ENCODE measurements at regions of chr1 and their contacts with region 1.

Region 1: DNA sequence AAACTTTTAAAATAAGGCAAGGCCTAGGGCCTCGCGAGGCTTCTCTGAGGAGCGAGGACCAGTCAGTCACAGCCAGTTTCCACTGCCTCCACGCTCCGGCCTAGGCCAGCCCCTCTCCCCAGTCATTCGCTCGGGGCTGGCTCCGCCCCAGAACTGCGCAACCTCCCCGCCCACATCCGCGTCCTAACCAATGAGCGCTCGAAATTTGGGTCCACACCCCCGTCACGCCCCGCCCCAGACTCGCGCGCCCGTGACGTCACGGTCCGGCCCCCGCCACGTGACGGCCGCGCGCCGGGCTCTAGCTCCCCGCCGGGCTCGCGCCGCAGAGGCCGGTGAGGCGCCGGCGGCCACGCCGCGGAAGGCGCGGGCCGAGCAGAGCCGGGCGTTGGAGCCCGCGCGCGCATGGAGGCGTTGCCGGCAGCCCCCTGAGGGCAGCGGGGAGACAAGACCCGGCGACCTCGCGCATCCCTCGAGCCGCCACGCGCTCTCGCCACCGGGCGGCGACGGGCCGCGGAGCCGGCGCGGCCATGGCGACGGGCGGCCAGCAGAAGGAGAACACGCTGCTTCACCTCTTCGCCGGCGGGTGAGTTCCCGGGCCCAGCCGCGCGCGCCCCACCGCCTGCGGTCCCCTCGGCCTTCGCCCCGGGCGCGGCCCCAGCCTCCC is at the start of gene SLC25A33:
- DNase-seq: peak; percentile 99
- H3K4me3 ChIP-seq: peak within 1 kb of the TSS; percentile 59 to 79 (median 73)
- H3K27ac ChIP-seq: peak within 1 kb of the TSS; percentile 87 to 96 (median 92)
- H3K4me1 ChIP-seq: peaks cover 0 to 28% (median 20%) of the 10 kb centered on the region in 4 donors
- H3K27me3 ChIP-seq: no peaks in the 10 kb centered on the region
- CTCF ChIP-seq: no peak
- EP300 ChIP-seq: peak in 2 of 4 donors; percentile 49 to 62
- POLR2A ChIP-seq: no peak
- total RNA-seq, gene SLC25A33: 3.9 to 11.8 (median 9.0) TPM

Region 2: GRCh38 chr1:9558271-9558945 is 19.1 kb after region 1 on chr1:
- intact Hi-C with region 1: loop called (anchors 2 kb)
- DNase-seq: peak; percentile 62
- H3K4me3 ChIP-seq: no peak overlapping the region
- H3K27ac ChIP-seq: peak overlapping the region; percentile 65 to 77 (median 68)
- H3K4me1 ChIP-seq: peaks cover 0 to 66% (median 63%) of the 10 kb centered on the region in 4 donors
- H3K27me3 ChIP-seq: no peaks in the 10 kb centered on the region
- CTCF ChIP-seq: no peak
- EP300 ChIP-seq: no peak
- POLR2A ChIP-seq: no peak

Region 3: GRCh38 chr1:9588551-9589143 is 49.4 kb after region 1 on chr1 and contains the start of gene TMEM201:
- intact Hi-C with region 1: loop called (anchors 2 kb)
- DNase-seq: peak; percentile 96
- H3K4me3 ChIP-seq: peak within 1 kb of the TSS; percentile 34 to 83 (median 78)
- H3K27ac ChIP-seq: peak within 1 kb of the TSS; percentile 66 to 86 (median 84)
- H3K4me1 ChIP-seq: peaks cover 0 to 44% (median 35%) of the 10 kb centered on the region in 4 donors
- H3K27me3 ChIP-seq: no peaks in the 10 kb centered on the region
- CTCF ChIP-seq: peak in 1 of 4 experiments; percentile 86
- EP300 ChIP-seq: no peak
- POLR2A ChIP-seq: no peak
- total RNA-seq, gene TMEM201: 3.5 to 5.8 (median 4.6) TPM

Region 4: GRCh38 chr1:9732123-9732971 is 193.1 kb after region 1 on chr1:
- intact Hi-C with region 1: no loop called
- DNase-seq: no peak
- H3K4me3 ChIP-seq: no peak overlapping the region
- H3K27ac ChIP-seq: no peak overlapping the region
- H3K4me1 ChIP-seq: no peaks in the 10 kb centered on the region
- H3K27me3 ChIP-seq: no peaks in the 10 kb centered on the region
- CTCF ChIP-seq: no peak
- EP300 ChIP-seq: no peak
- POLR2A ChIP-seq: no peak

Measured in sigmoid colon (tissue), 7 donors.